Panc1 (cell line): ENCODE measurements at regions of chr17 and their contacts with region 1.

Region 1: GRCh38 chr17:30519707-30520106 is 42.5 kb downstream of the GOSR1 start:
- DNase-seq: no peak
- ATAC-seq: no peak
- H3K4me3 ChIP-seq: no peak overlapping the region
- H3K27ac ChIP-seq: no peak overlapping the region
- H3K4me1 ChIP-seq: no peaks in the 10 kb centered on the region
- H3K27me3 ChIP-seq: no peaks in the 10 kb centered on the region
- CTCF ChIP-seq: no peak

Region 2: DNA sequence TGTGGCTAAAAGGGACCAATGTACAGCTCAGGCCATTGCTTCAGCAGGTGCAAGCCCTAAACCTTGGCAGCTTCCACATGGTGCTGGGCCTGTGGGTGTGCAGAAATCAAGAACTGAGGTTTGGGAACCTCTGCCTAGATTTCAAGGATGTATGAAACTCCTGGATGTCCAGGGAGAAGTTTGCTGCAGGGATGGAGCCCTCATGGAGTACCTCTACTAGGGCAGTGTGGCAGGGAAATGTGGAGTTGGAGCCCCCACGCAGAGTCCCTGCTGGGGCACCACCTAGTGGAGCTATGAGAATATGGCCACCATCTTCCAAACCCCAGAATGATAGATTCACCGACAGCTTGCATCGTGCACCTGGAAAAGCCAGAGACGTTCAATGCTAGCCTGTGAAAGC is 565.3 kb before region 1 on chr17:
- CTCF ChIA-PET with region 1: no interaction called
- POLR2A ChIA-PET with region 1: no interaction called
- in situ Hi-C with region 1: no loop called
- intact Hi-C with region 1: loop called (anchors 10 kb)
- DNase-seq: no peak
- ATAC-seq: no peak
- H3K4me3 ChIP-seq: no peak overlapping the region
- H3K27ac ChIP-seq: no peak overlapping the region
- H3K4me1 ChIP-seq: no peaks in the 10 kb centered on the region
- H3K27me3 ChIP-seq: no peaks in the 10 kb centered on the region
- CTCF ChIP-seq: no peak

Region 3: DNA sequence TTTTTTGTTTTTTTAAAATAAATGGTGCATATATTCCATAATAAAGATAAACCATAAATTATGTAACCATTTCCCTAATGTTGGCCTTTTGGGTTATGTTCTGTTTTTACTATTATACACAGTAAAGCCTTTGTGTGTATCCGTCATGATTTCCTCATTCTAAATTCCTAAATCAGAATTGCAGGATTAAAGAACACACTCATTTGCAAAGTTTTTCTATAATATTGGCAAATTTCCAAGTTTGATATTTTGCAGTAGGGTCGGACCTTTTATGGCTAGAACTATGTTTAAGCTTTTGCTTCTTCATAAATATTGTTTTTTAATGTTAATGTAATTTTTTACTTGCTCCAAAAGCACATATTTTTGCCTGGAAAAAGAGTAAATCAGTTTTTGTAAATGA is 25.9 kb before region 1 on chr17:
- CTCF ChIA-PET with region 1: no interaction called
- POLR2A ChIA-PET with region 1: interaction called, 14 read pairs
- in situ Hi-C with region 1: no loop called
- intact Hi-C with region 1: no loop called
- DNase-seq: no peak
- ATAC-seq: no peak
- H3K4me3 ChIP-seq: no peak overlapping the region
- H3K27ac ChIP-seq: no peak overlapping the region
- H3K4me1 ChIP-seq: no peaks in the 10 kb centered on the region
- H3K27me3 ChIP-seq: no peaks in the 10 kb centered on the region
- CTCF ChIP-seq: no peak